ENCODE measurements at regions of chrX and their contacts with region 1.

Region 1: DNA sequence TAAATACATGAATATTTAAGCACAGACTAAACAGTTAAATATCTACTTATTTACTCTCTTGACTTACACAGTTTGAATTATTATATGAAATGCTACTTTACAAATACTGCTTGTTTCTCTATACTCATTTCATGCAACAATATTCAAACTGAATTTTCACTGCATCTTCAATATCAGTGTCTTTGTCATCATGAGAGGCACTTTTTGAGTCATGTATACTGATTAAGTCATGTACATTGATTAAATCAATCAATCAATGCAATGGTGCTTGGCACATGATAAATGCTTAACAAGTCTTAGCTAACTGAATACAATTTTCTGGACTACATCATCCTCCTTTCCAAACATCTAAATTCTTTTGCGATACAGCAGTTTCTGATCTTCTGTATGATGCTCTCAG is 67.1 kb downstream of the CHM start:
- DNase-seq: no peak

Region 2: GRCh38 chrX:84168095-84168494 is 1812.2 kb before region 1 on chrX:
- intact Hi-C with region 1: no loop called
- DNase-seq: no peak

Region 3: DNA sequence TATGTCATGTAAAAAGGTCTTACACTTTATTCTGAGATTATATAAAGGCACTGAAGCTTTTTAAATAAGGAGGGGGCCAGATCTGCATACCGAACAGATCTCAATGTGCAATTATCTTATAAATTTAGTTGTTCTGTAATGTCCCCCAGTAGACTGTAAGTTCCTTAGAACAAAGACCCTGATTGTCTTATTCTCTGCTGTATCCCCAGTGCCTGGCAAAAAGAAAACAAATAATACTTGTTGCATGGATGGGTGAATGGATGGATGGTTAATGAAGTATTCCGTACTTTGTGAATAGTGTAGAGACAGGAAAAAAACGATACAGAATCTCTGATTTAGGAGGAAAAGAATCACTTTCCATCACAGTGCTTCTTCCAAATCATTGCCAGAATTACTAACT is 74.4 kb before region 1 on chrX:
- intact Hi-C with region 1: loop called in 1 of 2 experiments (anchors 2 kb)
- DNase-seq: no peak

Region 4: GRCh38 chrX:86964321-86964720 is 984.0 kb after region 1 on chrX:
- intact Hi-C with region 1: no loop called
- DNase-seq: no peak